Cardiac septum (tissue), 1 donor: ENCODE measurements at regions of chr2 and their contacts with region 1.

Region 1: GRCh38 chr2:12716282-12717190 is at the start of gene TRIB2:
- DNase-seq: peak; percentile 92
- total RNA-seq, gene TRIB2: 49.9 TPM

Region 2: DNA sequence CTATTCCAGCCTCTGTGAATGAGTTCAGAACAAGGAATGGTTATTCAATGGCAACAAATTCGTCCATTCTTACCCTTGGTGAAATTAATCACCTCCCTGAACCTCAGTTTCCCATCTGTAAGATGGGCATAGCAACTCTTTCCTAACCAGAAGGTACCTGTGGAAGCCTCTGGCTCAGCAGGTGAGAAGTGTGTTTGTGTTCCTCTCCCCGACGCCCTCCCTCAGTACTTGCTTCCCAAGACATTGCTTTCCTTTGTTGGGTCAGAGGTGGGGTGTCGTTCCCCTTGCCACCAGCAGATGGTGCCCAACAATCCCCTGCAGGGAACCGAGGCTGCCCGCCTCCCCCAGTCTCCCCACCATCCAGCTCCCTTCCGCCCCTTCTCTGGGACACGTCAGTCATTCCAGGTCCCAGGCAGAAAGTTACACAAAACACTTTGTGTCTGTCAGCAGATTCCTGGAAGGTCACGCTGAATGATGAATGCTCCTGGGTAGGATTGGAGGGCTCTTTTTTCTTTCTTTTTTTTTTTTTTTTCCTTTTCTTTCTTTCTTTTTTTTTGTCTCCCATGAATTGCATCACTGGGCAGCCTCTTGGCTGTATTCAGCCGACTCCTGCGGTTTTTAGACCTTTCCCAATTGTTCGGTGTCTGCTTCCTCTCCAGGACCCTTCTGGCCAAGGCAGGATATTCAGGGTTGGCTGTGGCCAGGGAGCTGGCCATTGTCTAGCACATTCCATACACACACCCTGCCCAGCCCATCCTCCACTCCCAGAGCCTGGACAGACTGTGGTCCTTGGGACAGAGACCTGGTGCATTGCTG is 852.8 kb before region 1 on chr2:
- intact Hi-C with region 1: loop called (anchors 1 kb)
- DNase-seq: peak; percentile 92

Region 3: GRCh38 chr2:11998218-11998617 is 718.3 kb before region 1 on chr2:
- intact Hi-C with region 1: no loop called
- DNase-seq: no peak

Region 4: GRCh38 chr2:12293874-12294273 is 422.7 kb before region 1 on chr2:
- intact Hi-C with region 1: no loop called
- DNase-seq: no peak

Region 5: GRCh38 chr2:12320991-12321641 is 395.4 kb before region 1 on chr2:
- intact Hi-C with region 1: loop called (anchors 5 kb)
- DNase-seq: no peak

Region 6: GRCh38 chr2:12555012-12555645 is 161.4 kb before region 1 on chr2:
- intact Hi-C with region 1: loop called (anchors 5 kb)
- DNase-seq: no peak

Region 7: DNA sequence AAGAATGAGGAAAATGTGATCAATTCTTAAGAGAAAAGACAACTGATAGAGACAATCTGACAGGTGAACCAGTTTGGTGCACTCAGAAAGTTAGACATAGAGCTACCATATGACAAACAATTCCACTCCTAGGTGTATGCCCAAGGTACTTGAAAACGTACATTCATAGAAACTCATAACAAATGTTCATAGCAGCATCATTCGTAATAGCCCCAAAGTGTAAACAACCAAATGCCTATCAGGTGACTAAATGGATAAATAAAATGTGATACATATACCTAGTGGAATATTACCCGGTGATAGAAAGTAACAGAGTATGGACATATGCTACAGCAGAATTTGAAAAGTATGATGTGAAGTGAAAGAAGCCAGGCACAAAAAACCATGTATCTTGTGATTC is 149.1 kb before region 1 on chr2:
- intact Hi-C with region 1: no loop called
- DNase-seq: no peak

Region 8: GRCh38 chr2:12819103-12819475 is 102.6 kb after region 1 on chr2:
- intact Hi-C with region 1: loop called (anchors 2 kb)
- DNase-seq: peak; percentile 82

Region 9: GRCh38 chr2:12931186-12931844 is 214.8 kb after region 1 on chr2:
- intact Hi-C with region 1: loop called (anchors 1 kb)
- DNase-seq: no peak

Region 10: DNA sequence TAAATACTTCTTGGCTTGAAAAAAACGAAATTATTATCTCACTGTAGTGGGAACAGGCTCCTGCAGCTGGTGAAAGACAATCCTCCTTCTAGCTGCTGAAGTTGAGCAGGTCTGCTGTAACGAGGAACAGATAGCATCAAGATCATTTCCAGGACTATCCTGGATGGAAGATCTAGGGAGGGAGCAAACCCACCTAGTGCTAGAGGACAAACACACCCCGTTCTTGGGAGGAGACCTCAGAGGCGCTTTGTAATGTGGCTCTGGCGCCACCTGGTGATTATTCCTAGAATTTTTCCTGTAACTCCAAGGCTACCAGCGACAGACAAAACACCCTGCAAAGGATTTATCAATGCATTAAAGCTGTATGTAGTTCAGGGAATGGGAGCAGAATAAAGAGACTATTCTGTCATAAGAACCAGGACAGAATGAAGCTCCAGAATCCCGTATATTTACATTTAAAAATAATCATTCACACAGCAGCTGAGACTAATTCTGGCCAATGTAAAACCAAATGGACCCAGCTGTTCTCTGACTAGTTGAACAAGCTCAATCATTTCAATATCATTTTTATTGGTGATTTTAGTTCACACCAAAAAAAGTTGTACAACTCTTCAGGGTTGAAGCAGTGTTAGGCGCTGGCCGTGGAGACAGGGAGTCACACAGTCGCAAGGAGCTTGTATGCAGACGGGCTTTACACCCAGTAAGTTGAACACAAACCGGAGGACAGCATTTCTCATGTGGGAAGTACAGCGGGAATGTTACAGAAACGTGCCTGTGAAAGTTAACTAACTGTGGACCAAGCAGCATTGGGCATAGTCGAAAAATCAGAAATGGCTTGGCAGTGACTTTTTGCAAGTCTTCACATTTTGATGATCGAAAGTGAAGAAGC is 290.5 kb after region 1 on chr2:
- intact Hi-C with region 1: loop called (anchors 2 kb)
- DNase-seq: no peak

Region 11: DNA sequence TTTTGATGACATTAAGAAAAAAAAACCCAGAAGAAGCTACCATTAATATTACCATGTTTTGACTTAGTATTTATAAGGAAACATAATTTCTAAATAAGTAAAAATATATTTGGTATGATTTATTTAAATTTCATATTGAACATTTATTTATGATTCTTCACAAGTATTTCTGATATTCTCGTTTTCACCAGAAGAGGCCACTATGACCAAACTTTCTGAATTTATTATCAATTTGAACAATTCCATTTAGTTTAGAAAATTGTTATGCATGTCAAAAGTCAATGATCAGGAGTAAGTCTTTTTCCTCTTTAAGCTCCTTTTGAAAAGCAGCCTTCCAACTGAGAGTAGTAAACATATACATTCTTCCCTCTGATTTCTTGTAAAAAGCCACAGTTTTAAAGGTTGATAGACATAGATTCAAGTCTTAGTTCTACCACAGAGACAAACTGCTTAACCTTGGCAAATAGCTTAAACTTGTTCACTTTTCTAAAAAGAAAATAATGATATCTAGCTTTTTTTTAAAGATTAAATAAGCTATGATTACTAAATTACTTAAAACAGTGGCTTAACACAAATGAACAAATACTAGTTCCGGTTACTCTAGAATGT is 330.1 kb after region 1 on chr2:
- intact Hi-C with region 1: no loop called
- DNase-seq: no peak